MCF 10A (cell line): ENCODE measurements at regions of chr4 and their contacts with region 1.

Region 1: GRCh38 chr4:41725254-41725653 is 23.3 kb downstream of the PHOX2B start:
- DNase-seq: no peak
- H3K4me3 Mint-ChIP-seq: no peak overlapping the region
- H3K27ac Mint-ChIP-seq: no peak overlapping the region
- H3K4me1 Mint-ChIP-seq: peaks cover 16% of the 10 kb centered on the region
- H3K27me3 Mint-ChIP-seq: no peaks in the 10 kb centered on the region
- CTCF ChIP-seq: peak; percentile 23

Region 2: DNA sequence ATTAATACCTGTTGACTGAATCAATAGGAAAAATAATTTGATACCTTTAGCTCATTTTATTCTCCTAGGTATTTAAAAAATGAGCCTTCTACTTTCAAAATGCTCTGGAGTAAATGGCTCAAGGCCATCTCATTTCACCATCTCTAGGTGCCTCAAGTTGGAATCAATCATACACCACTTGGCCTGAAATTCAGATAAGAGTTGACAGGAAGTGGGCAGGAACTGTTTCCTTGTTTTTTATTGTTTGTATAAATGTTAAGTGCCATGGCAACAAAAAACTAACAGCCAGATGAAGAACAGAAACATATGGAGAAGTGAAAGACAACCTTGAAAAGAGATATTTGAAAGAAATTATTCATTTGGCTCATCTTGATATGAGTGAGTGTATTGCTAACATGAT is 174.9 kb before region 1 on chr4:
- CTCF ChIA-PET with region 1: no interaction called
- POLR2A ChIA-PET with region 1: no interaction called
- intact Hi-C with region 1: no loop called
- DNase-seq: no peak
- H3K4me3 Mint-ChIP-seq: no peak overlapping the region
- H3K27ac Mint-ChIP-seq: peak overlapping the region; percentile 81
- H3K4me1 Mint-ChIP-seq: peaks cover 6% of the 10 kb centered on the region
- H3K27me3 Mint-ChIP-seq: no peaks in the 10 kb centered on the region
- CTCF ChIP-seq: no peak

Region 3: GRCh38 chr4:41751449-41752061 is 26.3 kb after region 1 on chr4:
- CTCF ChIA-PET with region 1: no interaction called
- POLR2A ChIA-PET with region 1: no interaction called
- intact Hi-C with region 1: no loop called
- DNase-seq: no peak
- H3K4me3 Mint-ChIP-seq: no peak overlapping the region
- H3K27ac Mint-ChIP-seq: no peak overlapping the region
- H3K4me1 Mint-ChIP-seq: no peaks in the 10 kb centered on the region
- H3K27me3 Mint-ChIP-seq: no peaks in the 10 kb centered on the region
- CTCF ChIP-seq: no peak

Region 4: DNA sequence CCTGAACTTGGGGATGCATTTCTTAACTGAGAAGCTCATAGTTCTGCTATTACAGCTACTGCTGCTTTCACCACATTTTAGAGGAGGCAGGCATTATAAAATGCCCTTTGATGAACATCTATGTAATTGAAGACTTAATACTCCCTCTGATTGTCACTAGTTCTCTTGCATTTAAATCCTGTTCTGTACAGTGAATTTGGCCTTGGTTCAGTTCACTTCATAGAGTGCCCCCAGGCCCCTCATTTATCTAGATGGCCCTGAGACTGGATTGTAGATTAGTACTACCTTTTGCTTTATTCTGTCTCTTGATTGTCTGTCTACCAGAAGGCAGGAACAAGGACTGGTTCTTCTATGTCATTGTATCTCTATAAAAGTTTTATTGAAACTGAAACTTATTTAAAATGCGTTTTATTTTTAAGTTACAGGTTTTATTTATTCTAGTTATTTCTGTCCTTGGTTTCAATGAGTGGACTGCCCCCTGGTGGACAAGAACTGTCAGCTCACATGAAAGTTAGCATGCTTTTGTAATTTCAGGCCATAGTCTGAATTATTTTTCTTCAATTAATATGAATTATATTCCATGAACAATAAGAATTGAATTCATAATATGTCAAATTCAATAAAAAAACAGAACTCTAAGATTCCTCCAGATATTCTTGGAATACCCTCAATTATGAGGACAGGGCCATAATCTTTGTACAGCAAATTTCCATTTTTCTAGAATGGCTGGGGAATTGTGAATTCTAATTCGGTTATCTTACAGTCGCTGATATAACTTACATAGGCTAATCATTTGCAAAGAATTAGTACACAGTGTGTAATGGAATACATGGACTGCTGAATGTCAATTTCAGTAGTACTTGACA is 162.8 kb after region 1 on chr4:
- CTCF ChIA-PET with region 1: interaction called, 10 read pairs
- POLR2A ChIA-PET with region 1: interaction called, 3 read pairs
- intact Hi-C with region 1: no loop called
- DNase-seq: peak; percentile 62
- H3K4me3 Mint-ChIP-seq: no peak overlapping the region
- H3K27ac Mint-ChIP-seq: peak overlapping the region; percentile 57
- H3K4me1 Mint-ChIP-seq: peaks cover 15% of the 10 kb centered on the region
- H3K27me3 Mint-ChIP-seq: no peaks in the 10 kb centered on the region
- CTCF ChIP-seq: peak; percentile 72